ENCODE measurements at regions of chr1 and their contacts with region 1.

Region 1: DNA sequence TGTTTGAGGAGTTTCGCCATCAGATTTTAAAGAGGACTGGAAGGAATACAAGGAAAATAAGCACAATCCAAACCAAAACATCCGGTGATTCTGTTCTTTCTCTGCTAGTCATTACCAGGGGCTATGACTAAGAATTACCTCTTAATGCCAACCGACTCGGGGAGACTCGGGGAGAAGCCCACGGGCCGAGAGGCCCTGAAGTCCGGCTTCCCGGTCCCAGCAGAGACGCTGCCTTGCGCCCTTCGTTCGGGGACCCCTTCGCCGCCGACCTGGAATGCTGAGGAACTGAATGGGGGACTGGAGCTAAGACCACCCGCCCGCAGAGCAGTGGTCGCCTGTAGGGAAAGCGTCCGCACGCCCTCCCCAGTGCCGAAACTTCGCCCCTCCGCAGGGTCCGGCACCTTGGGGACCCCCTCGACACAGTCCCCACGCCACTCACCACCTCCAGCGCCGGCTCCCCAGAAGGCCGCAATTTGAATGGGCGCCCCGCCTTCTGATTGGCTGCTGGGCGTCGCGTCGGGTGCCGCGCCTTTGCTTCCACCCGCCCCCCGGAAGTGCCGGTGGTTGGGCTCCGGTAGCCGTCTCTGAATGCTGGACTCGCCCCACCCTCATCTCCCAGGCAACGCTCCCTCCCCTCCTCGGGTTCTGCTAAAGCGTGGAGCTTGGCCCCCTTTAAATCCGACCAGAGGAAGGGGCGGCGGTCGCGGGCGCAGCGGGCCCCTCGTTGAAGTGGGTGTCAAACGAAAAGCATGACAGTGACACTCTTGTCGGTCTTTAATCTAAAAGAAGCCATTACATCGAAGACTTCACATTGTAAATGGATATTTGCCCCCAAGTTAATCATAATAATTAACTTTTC is at the start of gene KIF14:
- DNase-seq: peak; percentile 92
- CTCF ChIP-seq: no peak

Region 2: DNA sequence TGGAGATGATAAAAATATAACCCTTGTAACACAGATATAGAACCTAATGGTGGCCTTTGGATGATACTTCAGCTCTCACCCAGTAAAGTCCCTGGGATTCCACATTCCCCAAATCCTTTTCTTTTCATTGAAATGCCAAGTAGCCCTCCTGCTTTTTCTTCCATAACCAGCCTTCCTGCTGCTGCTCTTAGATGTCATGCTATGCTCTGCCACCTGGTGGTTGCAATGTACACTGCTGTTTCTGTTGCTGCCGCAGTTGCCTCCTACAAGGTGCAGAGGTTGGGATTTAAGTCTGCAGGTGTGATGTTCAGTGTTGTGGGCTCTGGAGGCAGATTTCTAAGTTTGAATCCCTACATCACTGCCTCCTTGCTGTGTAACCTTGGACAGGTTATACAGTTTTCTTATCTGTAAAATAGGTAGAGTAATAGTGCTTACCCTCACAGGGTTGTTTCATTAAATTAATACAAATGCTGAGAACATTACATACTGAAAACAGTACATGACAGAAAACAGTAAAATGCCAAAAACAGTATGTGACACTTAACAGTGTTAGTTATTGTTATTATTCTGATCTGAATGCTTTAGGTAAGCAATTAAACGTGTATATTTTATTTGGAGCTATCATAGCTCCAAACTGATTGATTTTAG is 182.5 kb after region 1 on chr1:
- in situ Hi-C with region 1: loop called (anchors 10 kb)
- DNase-seq: peak; percentile 59
- CTCF ChIP-seq: peak; percentile 94

Region 3: DNA sequence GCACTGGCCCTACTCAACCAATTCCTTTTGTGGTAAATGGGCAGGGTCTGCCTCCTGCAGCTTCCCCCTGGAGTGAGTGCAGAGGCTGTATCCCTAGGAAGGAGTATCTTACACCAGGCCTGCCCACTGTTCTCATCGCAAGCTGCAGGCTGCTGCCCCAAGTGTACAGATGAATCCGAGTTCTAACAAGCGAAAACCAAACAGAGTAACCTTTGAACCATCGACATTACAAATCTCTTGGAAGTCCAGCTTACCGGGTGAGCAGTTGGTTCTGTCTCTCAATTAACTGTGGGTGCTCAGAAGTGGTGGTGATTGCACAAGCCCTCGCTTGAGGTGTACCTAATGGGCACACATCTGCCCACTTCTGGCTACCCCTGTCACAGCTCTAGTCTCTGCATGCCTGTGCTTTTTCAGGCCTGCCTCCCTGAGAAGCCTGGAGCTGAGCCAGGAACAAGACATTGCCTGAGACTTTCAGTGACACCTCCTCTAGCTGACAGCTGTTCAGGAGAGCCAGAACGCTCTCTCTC is 296.9 kb after region 1 on chr1:
- in situ Hi-C with region 1: no loop called
- DNase-seq: no peak
- CTCF ChIP-seq: no peak

Measured in GM13977 (cell line).